ENCODE measurements at regions of chrX and their contacts with region 1.

Region 1: DNA sequence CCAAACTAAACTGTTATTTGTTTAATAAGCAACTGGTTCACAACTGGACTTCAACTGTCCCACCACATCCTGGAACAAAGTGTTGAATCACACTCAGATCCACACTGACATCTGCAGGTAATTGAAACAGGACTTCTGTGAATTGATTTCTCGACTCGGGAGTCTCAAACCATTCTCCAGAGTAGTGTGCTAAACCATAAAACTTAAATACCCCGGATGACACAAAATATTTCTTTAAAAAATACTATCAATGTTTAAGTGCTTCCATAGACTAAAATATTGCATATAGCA is 95.4 kb upstream of the PLAC1 start:
- DNase-seq: peak in 1 of 4 experiments; percentile 23
- ATAC-seq: no peak
- H3K4me3 ChIP-seq: no peak overlapping the region
- H3K27ac ChIP-seq: no peak overlapping the region
- H3K4me1 ChIP-seq: no peaks in the 10 kb centered on the region
- H3K27me3 ChIP-seq: no peaks in the 10 kb centered on the region; a peak in 1 of 5 replicates
- CTCF ChIP-seq: peak in 1 of 3 experiments; percentile 43; a peak in 2 of 6 replicates
- EP300 ChIP-seq: no peak
- POLR2A ChIP-seq: no peak
- RAD21 ChIP-seq: peak; percentile 70 to 72

Region 2: GRCh38 chrX:134484039-134484438 is 269.6 kb before region 1 on chrX:
- CTCF ChIA-PET with region 1: interaction called, 4 read pairs
- POLR2A ChIA-PET with region 1: no interaction called
- in situ Hi-C with region 1: no loop called
- intact Hi-C with region 1: loop called (anchors 5 kb)
- DNase-seq: peak; percentile 10 to 57 (median 17)
- ATAC-seq: peak; percentile 64; the same call in 2 of the 3 replicates
- H3K4me3 ChIP-seq: no peak overlapping the region
- H3K27ac ChIP-seq: no peak overlapping the region
- H3K4me1 ChIP-seq: no peaks in the 10 kb centered on the region
- H3K27me3 ChIP-seq: no peaks in the 10 kb centered on the region
- CTCF ChIP-seq: peak; percentile 33 to 63 (median 48); a peak in 4 of 6 replicates
- EP300 ChIP-seq: no peak
- POLR2A ChIP-seq: no peak
- RAD21 ChIP-seq: peak; percentile 67 to 68

Region 3: DNA sequence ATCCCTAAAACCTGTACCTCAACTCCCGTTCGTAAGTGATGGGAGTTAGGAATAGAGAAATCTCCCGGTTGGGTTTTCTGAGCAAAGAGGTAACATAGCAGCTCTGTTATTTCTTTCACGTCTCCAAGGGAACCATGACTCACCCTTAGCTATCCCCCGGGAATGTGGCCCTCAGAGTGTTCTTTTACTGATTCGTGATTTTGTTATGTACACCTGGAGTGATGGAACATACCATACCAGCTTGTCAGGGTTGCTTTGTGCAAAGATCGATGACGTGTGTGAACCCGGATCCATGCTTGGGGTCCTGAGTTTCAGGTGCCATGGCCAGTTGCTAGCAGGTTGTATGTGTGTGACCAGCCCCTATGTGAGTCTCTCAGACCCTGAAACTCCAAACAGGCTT is 241.1 kb before region 1 on chrX:
- CTCF ChIA-PET with region 1: no interaction called
- POLR2A ChIA-PET with region 1: no interaction called
- in situ Hi-C with region 1: loop called (anchors 10 kb)
- intact Hi-C with region 1: no loop called
- DNase-seq: no peak
- ATAC-seq: no peak
- H3K4me3 ChIP-seq: no peak overlapping the region
- H3K27ac ChIP-seq: no peak overlapping the region
- H3K4me1 ChIP-seq: no peaks in the 10 kb centered on the region
- H3K27me3 ChIP-seq: no peaks in the 10 kb centered on the region
- CTCF ChIP-seq: no peak
- EP300 ChIP-seq: no peak
- POLR2A ChIP-seq: no peak
- RAD21 ChIP-seq: no peak

Region 4: GRCh38 chrX:134520860-134521390 is 232.7 kb before region 1 on chrX:
- CTCF ChIA-PET with region 1: interaction called, 5 read pairs
- POLR2A ChIA-PET with region 1: no interaction called
- in situ Hi-C with region 1: loop called (anchors 10 kb)
- intact Hi-C with region 1: loop called (anchors 2 kb)
- DNase-seq: peak in 3 of 4 experiments; percentile 10 to 67 (median 39)
- ATAC-seq: peak; percentile 96
- H3K4me3 ChIP-seq: no peak overlapping the region
- H3K27ac ChIP-seq: no peak overlapping the region
- H3K4me1 ChIP-seq: no peaks in the 10 kb centered on the region
- H3K27me3 ChIP-seq: no peaks in the 10 kb centered on the region
- CTCF ChIP-seq: peak; percentile 68 to 72 (median 72)
- EP300 ChIP-seq: no peak
- POLR2A ChIP-seq: no peak
- RAD21 ChIP-seq: peak; percentile 85 to 90

Measured in K562 (cell line).